ENCODE measurements at regions of chr10 and their contacts with region 1.

Region 1: GRCh38 chr10:43105102-43105785 is 28.4 kb downstream of the RET start:
- DNase-seq: peak; percentile 66 to 68
- H3K4me3 ChIP-seq: peak overlapping the region in 2 of 3 donors; percentile 20 to 46
- H3K27ac ChIP-seq: no peak overlapping the region
- H3K4me1 ChIP-seq: peaks cover 10% of the 10 kb centered on the region in 2 donors
- H3K27me3 ChIP-seq: no peaks in the 10 kb centered on the region
- CTCF ChIP-seq: peak; percentile 87 to 100 (median 96)
- POLR2A ChIP-seq: peak in 1 of 2 donors; percentile 21

Region 2: DNA sequence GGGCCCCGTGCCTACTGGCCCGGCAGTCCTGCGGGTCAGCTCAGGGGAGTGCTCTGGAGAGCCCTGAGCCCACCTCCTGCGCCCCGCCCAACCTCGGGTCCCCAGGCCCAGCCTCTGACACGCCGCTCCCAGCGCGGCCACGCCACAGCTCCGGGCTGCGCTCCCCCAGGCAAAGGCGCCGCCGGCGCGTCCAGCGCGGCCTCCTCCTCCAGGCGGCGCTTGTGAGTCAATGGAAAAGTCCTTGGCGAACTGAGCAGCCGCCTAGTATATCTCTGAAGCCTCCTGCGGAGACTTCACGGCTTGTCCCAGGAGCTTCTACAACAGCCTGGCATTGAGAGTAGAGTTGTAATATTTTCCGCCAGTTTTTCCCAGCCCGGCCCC is 352.1 kb before region 1 on chr10:
- intact Hi-C with region 1: loop called (anchors 10 kb)
- DNase-seq: peak; percentile 76 to 83
- H3K4me3 ChIP-seq: peak overlapping the region in 2 of 3 donors; percentile 10 to 55
- H3K27ac ChIP-seq: peak overlapping the region in 2 of 3 donors; percentile 52 to 77
- H3K4me1 ChIP-seq: peaks cover 10 to 12% of the 10 kb centered on the region in 2 donors
- H3K27me3 ChIP-seq: no peaks in the 10 kb centered on the region
- CTCF ChIP-seq: peak; percentile 60 to 95 (median 88)
- POLR2A ChIP-seq: peak in 1 of 2 donors; percentile 52

Region 3: DNA sequence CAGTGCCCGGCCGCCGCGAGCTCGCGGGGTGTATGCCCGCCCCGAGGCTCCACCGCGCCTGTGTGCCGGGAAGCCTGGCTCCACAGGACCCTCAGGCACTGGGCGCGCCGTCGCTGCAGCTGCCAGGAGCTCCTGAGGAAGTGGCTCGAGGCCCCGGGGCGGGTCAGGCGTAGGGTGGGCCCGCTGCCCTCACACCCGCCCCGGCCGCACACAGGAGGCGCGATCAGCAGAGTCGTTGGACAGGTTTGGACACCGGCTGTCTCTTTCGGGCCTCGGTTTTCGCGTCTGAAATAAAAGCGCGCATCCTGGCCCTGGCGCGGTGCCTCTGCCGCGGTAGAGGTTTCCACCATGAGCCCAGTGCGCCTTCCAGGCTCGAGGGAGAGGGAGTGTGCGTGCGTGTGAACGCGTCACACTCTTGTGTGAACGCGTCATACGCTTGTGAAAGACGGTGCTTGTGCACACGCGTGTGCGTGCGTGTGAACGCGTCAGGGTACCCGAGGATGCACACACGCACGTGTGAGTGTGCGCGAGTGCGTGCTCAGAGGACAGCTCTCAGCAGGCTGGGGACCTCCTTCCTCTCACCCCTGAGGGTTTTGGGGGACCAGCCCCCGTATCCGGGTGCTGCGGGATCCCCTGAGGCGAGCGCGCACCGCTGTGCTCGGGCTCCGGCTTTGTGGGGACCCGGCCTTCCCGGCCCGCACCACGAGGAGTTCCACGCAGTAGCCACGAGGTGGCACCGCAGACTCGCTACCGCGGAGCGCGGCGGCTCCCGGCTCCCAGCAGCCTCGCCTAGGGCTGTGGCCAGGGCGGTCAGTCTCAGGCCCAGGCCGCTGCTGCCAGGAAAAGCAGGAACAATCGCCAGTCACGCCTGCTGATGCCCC is 238.9 kb before region 1 on chr10:
- intact Hi-C with region 1: loop called (anchors 2 kb)
- DNase-seq: peak; percentile 73 to 78
- H3K4me3 ChIP-seq: no peak overlapping the region
- H3K27ac ChIP-seq: no peak overlapping the region
- H3K4me1 ChIP-seq: peaks cover 0 to 3% of the 10 kb centered on the region in 2 donors
- H3K27me3 ChIP-seq: peaks cover 3% of the 10 kb centered on the region
- CTCF ChIP-seq: peak; percentile 24 to 72 (median 44)
- POLR2A ChIP-seq: no peak

Region 4: DNA sequence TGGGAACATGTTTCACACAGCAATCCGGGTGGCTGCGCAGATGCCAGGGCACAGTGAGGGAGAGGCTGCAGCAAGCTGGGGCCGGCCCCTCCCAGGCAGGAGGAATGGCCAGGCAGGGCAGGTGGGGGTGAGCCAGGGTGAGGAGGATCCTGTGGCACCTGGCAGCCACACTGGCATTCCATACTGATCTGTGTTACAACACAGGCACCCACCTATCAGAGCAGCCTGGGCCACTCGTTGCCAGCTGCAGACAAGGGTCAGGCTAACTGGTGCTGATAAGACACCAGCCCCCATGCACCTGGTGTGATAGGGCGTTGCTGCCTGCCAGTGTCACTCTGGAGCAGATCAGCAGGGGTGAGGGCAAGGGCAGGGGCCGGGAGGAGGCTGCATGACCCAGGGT is 45.0 kb before region 1 on chr10:
- intact Hi-C with region 1: no loop called
- DNase-seq: no peak
- H3K4me3 ChIP-seq: no peak overlapping the region
- H3K27ac ChIP-seq: no peak overlapping the region
- H3K4me1 ChIP-seq: peaks cover 0 to 11% of the 10 kb centered on the region in 2 donors
- H3K27me3 ChIP-seq: no peaks in the 10 kb centered on the region
- CTCF ChIP-seq: no peak
- POLR2A ChIP-seq: no peak

Region 5: GRCh38 chr10:43138021-43138756 is 32.9 kb after region 1 on chr10 and contains the start of gene CSGALNACT2:
- intact Hi-C with region 1: no loop called
- DNase-seq: peak; percentile 82 to 86
- H3K4me3 ChIP-seq: peak within 1 kb of the TSS; percentile 54 to 83 (median 81)
- H3K27ac ChIP-seq: peak within 1 kb of the TSS; percentile 61 to 96 (median 96)
- H3K4me1 ChIP-seq: peaks cover 15 to 17% of the 10 kb centered on the region in 2 donors
- H3K27me3 ChIP-seq: no peaks in the 10 kb centered on the region
- CTCF ChIP-seq: no peak
- POLR2A ChIP-seq: peak; percentile 38 to 90
- total RNA-seq, gene CSGALNACT2: 14.4 to 24.1 (median 20.0) TPM